ENCODE measurements at regions of chr19 and their contacts with region 1.

Region 1: GRCh38 chr19:16185123-16185767 is at the start of gene FAM32A:
- DNase-seq: peak; percentile 99
- H3K4me3 ChIP-seq: peak within 1 kb of the TSS; percentile 88
- H3K27ac ChIP-seq: peak within 1 kb of the TSS; percentile 42
- H3K4me1 ChIP-seq: peaks cover 42% of the 10 kb centered on the region
- CTCF ChIP-seq: no peak
- total RNA-seq, gene FAM32A: 71.0 and 104 TPM in 2 replicates

Region 2: GRCh38 chr19:16041299-16041990 is 143.8 kb before region 1 on chr19:
- CTCF ChIA-PET with region 1: interaction called, 4 read pairs
- POLR2A ChIA-PET with region 1: no interaction called
- intact Hi-C with region 1: loop called (anchors 1 kb)
- DNase-seq: peak; percentile 68
- H3K4me3 ChIP-seq: no peak overlapping the region
- H3K27ac ChIP-seq: no peak overlapping the region
- H3K4me1 ChIP-seq: no peaks in the 10 kb centered on the region
- CTCF ChIP-seq: peak; percentile 99

Region 3: DNA sequence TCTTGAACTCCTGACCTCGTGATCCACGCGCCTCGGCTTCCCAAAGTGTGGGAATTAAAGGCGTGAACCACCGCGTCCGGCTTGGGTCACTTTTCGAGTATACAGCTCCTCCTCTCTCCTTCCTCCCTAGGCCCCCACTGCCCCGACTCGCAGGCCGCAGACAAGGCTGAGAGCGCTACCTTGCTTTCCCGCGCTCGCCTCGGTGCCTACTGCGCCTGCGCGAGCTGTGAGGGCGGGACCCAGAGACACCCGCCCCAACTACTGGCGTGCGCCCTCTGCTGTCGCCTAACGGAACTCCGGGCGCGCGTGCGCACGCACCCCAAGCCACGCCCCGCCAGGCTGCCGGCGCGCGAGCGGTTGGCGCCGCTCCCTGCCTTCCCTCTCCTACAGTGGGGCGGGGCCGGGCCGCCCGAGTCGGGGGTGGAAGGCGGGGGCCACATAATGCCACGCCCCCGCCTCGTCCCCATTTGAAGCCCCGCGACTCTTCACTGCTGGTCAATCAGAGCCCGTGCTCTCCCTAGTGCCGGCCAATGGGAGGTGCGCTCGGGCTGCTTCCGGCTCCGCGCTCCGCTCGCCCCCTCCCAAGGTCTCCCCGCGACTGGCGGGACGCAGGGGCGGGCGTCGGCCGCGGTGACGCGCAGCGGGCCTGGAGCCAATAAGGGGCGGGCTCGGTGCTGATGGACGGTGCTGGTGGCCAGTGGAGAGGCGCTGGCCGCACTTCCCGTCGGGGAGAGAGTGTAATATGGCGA is 73.9 kb before region 1 on chr19 and contains the start of gene RAB8A:
- CTCF ChIA-PET with region 1: interaction called, 3 read pairs
- POLR2A ChIA-PET with region 1: interaction called, 3 read pairs
- intact Hi-C with region 1: loop called (anchors 2 kb)
- DNase-seq: peak; percentile 99
- H3K4me3 ChIP-seq: peak within 1 kb of the TSS; percentile 96
- H3K27ac ChIP-seq: peak within 1 kb of the TSS; percentile 63
- H3K4me1 ChIP-seq: peaks cover 50% of the 10 kb centered on the region
- CTCF ChIP-seq: peak; percentile 81
- total RNA-seq, gene RAB8A: 64.9 and 69.1 TPM in 2 replicates

Region 4: DNA sequence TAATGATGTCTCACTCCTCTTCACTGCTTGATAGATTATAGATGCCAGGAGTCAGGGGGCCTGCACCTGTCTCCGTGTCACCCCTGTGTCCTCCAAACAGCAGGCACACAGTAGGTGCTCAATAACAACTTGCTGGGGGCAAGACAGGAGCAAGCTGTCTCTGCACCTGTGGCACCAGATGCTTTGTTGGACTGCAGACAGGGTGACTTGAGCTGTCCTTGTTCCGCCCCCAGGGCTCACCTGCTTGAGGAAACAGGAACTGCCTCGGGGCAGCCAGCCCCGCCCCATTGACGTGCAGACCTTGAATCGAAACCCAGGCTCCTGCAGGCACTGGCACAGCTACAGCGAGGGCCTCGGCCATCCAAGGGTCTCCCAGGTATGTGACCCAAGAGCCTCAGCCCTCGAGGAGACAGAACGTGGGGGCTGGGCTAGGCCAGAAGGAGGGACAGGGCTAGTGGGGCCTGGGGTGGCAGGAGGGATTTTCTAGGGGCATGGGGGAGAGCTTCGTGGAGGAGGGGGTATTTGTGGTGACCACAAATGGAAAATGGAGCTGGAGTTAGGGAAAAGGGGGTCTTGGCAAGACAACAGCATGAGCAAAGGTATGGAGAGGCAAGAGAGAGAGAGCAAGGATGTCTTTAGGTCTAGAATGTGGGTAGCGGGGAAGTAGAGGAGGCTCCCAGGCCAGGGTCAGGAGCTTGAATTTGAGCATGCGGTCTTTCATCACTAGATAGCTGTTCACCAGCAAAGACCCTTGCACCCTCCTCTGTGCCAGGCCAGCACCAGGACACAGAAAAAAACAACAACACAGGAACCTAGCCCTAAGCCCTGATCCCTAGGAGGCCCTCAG is 41.6 kb before region 1 on chr19 and contains the start of gene HSH2D:
- CTCF ChIA-PET with region 1: interaction called, 3 read pairs
- POLR2A ChIA-PET with region 1: interaction called, 13 read pairs
- intact Hi-C with region 1: loop called (anchors 2 kb)
- DNase-seq: peak; percentile 97
- H3K4me3 ChIP-seq: peak within 1 kb of the TSS; percentile 76
- H3K27ac ChIP-seq: peak within 1 kb of the TSS; percentile 81
- H3K4me1 ChIP-seq: peaks cover 70% of the 10 kb centered on the region
- CTCF ChIP-seq: no peak
- total RNA-seq, gene HSH2D: 52.4 and 57.6 TPM in 2 replicates

Region 5: DNA sequence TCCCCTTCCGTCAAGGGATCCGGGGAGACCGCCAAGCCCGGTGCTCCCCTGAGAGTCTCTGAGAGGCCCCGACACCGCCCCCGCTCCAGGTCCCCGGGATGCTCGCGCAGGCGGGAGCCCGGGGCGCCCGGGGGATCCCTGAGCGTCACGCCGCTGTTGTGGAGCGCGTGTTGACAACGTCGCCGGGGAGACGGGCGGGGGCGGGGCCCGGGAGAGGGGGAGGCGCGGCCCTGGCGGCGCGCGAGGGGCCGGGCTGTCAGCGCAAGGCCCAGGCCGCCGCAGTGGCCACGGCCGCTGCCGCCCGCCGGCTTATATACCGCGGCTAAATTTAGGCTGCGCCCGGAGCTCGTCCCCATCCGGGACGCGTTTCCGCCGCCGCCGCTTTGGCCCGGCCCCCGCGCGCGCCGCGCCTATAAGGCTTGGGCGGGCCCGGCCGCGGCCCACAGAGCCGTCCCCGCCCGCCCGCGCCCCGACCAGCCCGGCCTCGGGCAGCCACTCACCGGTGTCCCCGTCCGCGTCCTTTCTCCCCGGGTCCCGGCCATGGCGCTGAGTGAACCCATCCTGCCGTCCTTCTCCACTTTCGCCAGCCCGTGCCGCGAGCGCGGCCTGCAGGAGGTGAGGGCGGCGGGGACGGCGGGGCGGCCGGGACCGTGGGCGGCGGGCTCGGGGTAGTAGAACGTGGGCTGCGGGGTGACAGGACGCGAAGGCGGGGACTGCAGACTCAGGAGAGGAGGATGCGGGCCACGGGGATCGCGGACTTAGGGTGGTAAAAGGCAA is 139.3 kb after region 1 on chr19 and contains the start of gene KLF2:
- CTCF ChIA-PET with region 1: no interaction called
- POLR2A ChIA-PET with region 1: no interaction called
- intact Hi-C with region 1: no loop called
- DNase-seq: peak; percentile 86
- H3K4me3 ChIP-seq: peak within 1 kb of the TSS; percentile 71
- H3K27ac ChIP-seq: no peak within 1 kb of the TSS
- H3K4me1 ChIP-seq: peaks cover 88% of the 10 kb centered on the region
- CTCF ChIP-seq: no peak
- total RNA-seq, gene KLF2: 4.5 and 8.6 TPM in 2 replicates

Measured in OCI-LY7 (cell line).